ENCODE measurements at regions of chr9 and their contacts with region 1.

Region 1: GRCh38 chr9:89815903-89816573 is 211.2 kb downstream of the GADD45G start:
- DNase-seq: peak; percentile 65
- ATAC-seq: peak; percentile 95
- H3K4me3 Mint-ChIP-seq: peak overlapping the region; percentile 21
- H3K27ac Mint-ChIP-seq: peak overlapping the region; percentile 83
- H3K4me1 Mint-ChIP-seq: peaks cover 52% of the 10 kb centered on the region
- H3K27me3 Mint-ChIP-seq: no peaks in the 10 kb centered on the region
- CTCF ChIP-seq: no peak

Region 2: DNA sequence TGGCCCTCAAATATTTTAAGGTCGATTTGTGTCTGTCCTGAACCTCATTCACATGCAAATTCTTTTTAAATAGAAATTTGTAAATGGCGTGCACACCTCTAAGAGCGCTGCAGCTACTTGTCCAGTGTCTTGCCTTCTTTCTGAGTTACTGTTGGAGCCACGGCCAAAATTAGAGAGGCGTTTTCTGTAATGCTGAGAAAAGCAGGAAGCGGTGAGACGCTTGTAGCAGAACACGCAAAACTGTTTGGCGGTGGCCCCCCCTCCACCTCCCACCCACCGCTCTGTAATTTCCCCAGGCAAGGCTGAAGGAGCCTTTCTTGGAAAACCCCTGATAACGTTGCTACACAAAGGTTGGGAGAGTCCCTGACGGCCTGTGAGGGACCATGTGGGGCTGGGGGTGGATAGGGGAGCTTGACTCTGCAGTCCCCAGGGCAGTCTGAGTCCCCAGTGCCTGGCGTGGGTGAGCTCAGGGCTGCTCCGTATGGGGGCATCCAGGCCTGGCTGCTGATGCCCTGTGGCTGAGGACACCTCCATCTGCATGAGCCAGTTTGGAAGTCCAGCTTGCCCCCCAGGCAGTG is 114.7 kb before region 1 on chr9:
- CTCF ChIA-PET with region 1: no interaction called
- POLR2A ChIA-PET with region 1: interaction called, 8 read pairs
- intact Hi-C with region 1: loop called (anchors 1 kb)
- DNase-seq: peak; percentile 54
- ATAC-seq: peak; percentile 97
- H3K4me3 Mint-ChIP-seq: peak overlapping the region; percentile 66
- H3K27ac Mint-ChIP-seq: peak overlapping the region; percentile 57
- H3K4me1 Mint-ChIP-seq: peaks cover 39% of the 10 kb centered on the region
- H3K27me3 Mint-ChIP-seq: no peaks in the 10 kb centered on the region
- CTCF ChIP-seq: no peak

Region 3: GRCh38 chr9:89732295-89732938 is 83.6 kb before region 1 on chr9:
- CTCF ChIA-PET with region 1: no interaction called
- POLR2A ChIA-PET with region 1: no interaction called
- intact Hi-C with region 1: no loop called
- DNase-seq: no peak
- ATAC-seq: no peak
- H3K4me3 Mint-ChIP-seq: no peak overlapping the region
- H3K27ac Mint-ChIP-seq: no peak overlapping the region
- H3K4me1 Mint-ChIP-seq: no peaks in the 10 kb centered on the region
- H3K27me3 Mint-ChIP-seq: no peaks in the 10 kb centered on the region
- CTCF ChIP-seq: no peak

Region 4: GRCh38 chr9:89781838-89782517 is 34.1 kb before region 1 on chr9:
- CTCF ChIA-PET with region 1: no interaction called
- POLR2A ChIA-PET with region 1: interaction called, 10 read pairs
- intact Hi-C with region 1: loop called (anchors 1 kb)
- DNase-seq: peak; percentile 33
- ATAC-seq: peak; percentile 99
- H3K4me3 Mint-ChIP-seq: peak overlapping the region; percentile 32
- H3K27ac Mint-ChIP-seq: peak overlapping the region; percentile 54
- H3K4me1 Mint-ChIP-seq: peaks cover 23% of the 10 kb centered on the region
- H3K27me3 Mint-ChIP-seq: no peaks in the 10 kb centered on the region
- CTCF ChIP-seq: no peak

Region 5: GRCh38 chr9:90025816-90026215 is 209.8 kb after region 1 on chr9:
- CTCF ChIA-PET with region 1: no interaction called
- POLR2A ChIA-PET with region 1: interaction called, 4 read pairs
- intact Hi-C with region 1: loop called (anchors 10 kb)
- DNase-seq: no peak
- ATAC-seq: no peak
- H3K4me3 Mint-ChIP-seq: no peak overlapping the region
- H3K27ac Mint-ChIP-seq: no peak overlapping the region
- H3K4me1 Mint-ChIP-seq: peaks cover 60% of the 10 kb centered on the region
- H3K27me3 Mint-ChIP-seq: no peaks in the 10 kb centered on the region
- CTCF ChIP-seq: no peak

Region 6: DNA sequence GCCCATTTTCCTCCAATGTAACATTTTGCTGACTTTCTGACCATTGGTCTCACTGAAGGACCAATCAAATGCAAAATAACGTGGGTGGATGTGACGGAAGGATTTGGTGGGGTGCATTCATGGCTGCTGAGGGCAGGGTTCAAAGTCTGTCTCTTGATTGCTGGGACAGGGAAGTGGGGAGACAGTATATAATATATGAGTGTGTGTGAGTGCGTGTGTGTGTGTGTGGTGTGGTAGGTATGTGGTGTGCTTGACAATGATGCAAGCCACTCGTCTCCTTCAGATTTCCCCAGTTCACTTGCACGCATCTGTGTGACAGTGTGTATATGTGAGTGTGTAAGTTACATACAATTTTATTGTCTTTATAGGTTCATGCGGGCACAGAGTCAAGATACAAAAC is 349.2 kb after region 1 on chr9:
- CTCF ChIA-PET with region 1: no interaction called
- POLR2A ChIA-PET with region 1: no interaction called
- intact Hi-C with region 1: no loop called
- DNase-seq: no peak
- ATAC-seq: no peak
- H3K4me3 Mint-ChIP-seq: no peak overlapping the region
- H3K27ac Mint-ChIP-seq: no peak overlapping the region
- H3K4me1 Mint-ChIP-seq: peaks cover 2% of the 10 kb centered on the region
- H3K27me3 Mint-ChIP-seq: no peaks in the 10 kb centered on the region
- CTCF ChIP-seq: no peak